ENCODE measurements at regions of chr12 and their contacts with region 1.

Region 1: DNA sequence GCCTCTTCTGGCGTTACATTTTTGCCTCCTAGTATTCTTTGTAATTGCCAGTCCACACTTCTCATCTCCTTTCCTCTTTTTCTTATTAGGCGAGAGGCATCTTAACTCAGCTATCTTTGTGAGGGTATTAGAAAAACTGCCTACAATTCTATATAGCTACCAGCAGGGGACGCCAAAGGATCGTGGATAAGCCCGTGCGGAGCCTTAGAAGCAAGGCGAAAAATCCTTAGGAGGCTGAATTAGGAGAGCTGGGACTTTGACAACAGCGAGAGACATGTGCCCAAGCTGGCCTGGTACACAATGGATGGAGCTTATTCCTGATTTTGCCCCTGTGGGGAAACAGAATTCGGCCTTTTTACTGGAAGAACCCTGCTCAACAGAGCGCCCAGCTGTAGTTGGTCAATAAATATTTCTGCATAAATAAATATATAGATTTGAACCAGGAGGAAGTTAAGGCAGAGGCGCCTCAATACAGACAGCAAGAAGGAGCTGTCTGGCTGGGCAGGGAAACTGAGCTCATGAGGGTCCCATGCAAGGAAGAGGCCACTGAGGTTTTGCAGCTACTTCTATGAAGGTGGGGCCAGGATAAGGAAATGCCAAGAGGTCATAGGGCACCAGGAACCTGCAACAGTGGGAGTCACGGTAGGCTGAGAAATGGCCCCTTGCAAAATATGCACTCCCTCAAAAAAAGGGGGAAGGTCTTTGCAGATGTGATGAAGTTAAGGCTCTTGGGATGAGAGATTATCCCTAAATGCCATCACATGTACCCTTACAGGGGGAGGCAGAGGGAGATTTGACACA is 14.6 kb upstream of the RBM19 start:
- DNase-seq: peak; percentile 36 to 79
- ATAC-seq: peak; percentile 71 to 89
- H3K4me3 ChIP-seq: no peak overlapping the region
- H3K27ac ChIP-seq: no peak overlapping the region
- H3K4me1 ChIP-seq: no peaks in the 10 kb centered on the region
- CTCF ChIP-seq: peak; percentile 96
- EP300 ChIP-seq: no peak
- POLR2A ChIP-seq: no peak
- RAD21 ChIP-seq: peak; percentile 94 to 100

Region 2: GRCh38 chr12:113965951-113966797 is 14.6 kb before region 1 on chr12 and contains the start of gene RBM19:
- CTCF ChIA-PET with region 1: interaction called, 36 read pairs
- POLR2A ChIA-PET with region 1: interaction called, 3 read pairs
- DNase-seq: peak; percentile 97 to 98
- ATAC-seq: peak; percentile 89 to 98
- H3K4me3 ChIP-seq: peak within 1 kb of the TSS; percentile 62
- H3K27ac ChIP-seq: peak within 1 kb of the TSS; percentile 64 to 87
- H3K4me1 ChIP-seq: peaks cover 11% of the 10 kb centered on the region; the same call in 2 of the 3 replicates
- CTCF ChIP-seq: peak; percentile 89
- EP300 ChIP-seq: no peak
- POLR2A ChIP-seq: peak; percentile 77
- RAD21 ChIP-seq: peak; percentile 52 to 61
- polyA plus RNA-seq, gene RBM19: 14.9 and 16.0 TPM in 2 replicates

Region 3: GRCh38 chr12:113996026-113996425 is 15.3 kb after region 1 on chr12:
- CTCF ChIA-PET with region 1: interaction called, 38 read pairs
- POLR2A ChIA-PET with region 1: no interaction called
- DNase-seq: no peak
- ATAC-seq: peak; percentile 61 to 78; a peak in 4 of 6 replicates
- H3K4me3 ChIP-seq: no peak overlapping the region
- H3K27ac ChIP-seq: no peak overlapping the region
- H3K4me1 ChIP-seq: no peaks in the 10 kb centered on the region
- CTCF ChIP-seq: no peak
- EP300 ChIP-seq: no peak
- POLR2A ChIP-seq: no peak
- RAD21 ChIP-seq: no peak

Region 4: GRCh38 chr12:114263056-114263805 is 282.5 kb after region 1 on chr12:
- CTCF ChIA-PET with region 1: no interaction called
- POLR2A ChIA-PET with region 1: no interaction called
- DNase-seq: no peak
- ATAC-seq: no peak
- H3K4me3 ChIP-seq: no peak overlapping the region
- H3K27ac ChIP-seq: no peak overlapping the region
- H3K4me1 ChIP-seq: no peaks in the 10 kb centered on the region
- CTCF ChIP-seq: no peak
- EP300 ChIP-seq: no peak
- POLR2A ChIP-seq: no peak
- RAD21 ChIP-seq: no peak

Region 5: GRCh38 chr12:114476159-114476558 is 495.4 kb after region 1 on chr12:
- CTCF ChIA-PET with region 1: interaction called, 40 read pairs
- POLR2A ChIA-PET with region 1: no interaction called
- DNase-seq: peak in 1 of 2 experiments; percentile 49
- ATAC-seq: peak; percentile 48 to 78; a peak in 4 of 6 replicates
- H3K4me3 ChIP-seq: no peak overlapping the region
- H3K27ac ChIP-seq: no peak overlapping the region
- H3K4me1 ChIP-seq: 0 out of 3 replicates have a peak, but pooled peaks cover 6% of the 10 kb centered on the region
- CTCF ChIP-seq: peak; percentile 56
- EP300 ChIP-seq: no peak
- POLR2A ChIP-seq: no peak
- RAD21 ChIP-seq: peak; percentile 55 to 66

Region 6: DNA sequence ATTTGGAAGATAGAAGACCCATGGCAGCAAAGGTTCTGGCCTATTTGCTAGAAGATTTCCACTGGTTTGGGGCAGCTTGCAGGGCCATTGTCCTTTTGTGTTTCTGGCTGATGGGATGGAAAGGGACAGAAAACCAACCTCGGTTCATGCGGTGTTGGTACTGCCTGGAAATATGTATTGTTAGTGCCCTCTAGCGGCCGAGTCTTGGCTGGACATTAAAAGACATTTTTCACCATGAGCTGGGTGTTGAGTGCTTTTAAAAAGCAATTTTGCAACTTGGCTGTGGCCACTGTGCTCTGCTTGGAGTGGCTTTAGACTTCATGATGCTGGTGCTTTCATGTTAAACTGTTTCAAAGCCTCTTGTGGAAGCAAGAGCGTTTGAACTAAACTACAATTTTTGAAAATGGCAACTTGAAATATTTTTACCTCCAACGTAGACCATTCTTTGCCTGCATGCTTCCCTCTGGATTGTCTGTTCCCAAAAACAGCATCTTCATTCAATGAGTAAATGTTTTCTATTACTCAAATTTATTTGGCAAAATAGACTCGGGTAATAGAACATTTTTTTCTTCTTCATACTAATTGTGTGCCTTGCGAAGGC is 527.9 kb after region 1 on chr12:
- CTCF ChIA-PET with region 1: interaction called, 19 read pairs
- POLR2A ChIA-PET with region 1: no interaction called
- DNase-seq: peak; percentile 76 to 80
- ATAC-seq: peak; percentile 73 to 89
- H3K4me3 ChIP-seq: no peak overlapping the region
- H3K27ac ChIP-seq: no peak overlapping the region
- H3K4me1 ChIP-seq: no peaks in the 10 kb centered on the region
- CTCF ChIP-seq: peak; percentile 71
- EP300 ChIP-seq: no peak
- POLR2A ChIP-seq: no peak
- RAD21 ChIP-seq: peak; percentile 72 to 84

Region 7: DNA sequence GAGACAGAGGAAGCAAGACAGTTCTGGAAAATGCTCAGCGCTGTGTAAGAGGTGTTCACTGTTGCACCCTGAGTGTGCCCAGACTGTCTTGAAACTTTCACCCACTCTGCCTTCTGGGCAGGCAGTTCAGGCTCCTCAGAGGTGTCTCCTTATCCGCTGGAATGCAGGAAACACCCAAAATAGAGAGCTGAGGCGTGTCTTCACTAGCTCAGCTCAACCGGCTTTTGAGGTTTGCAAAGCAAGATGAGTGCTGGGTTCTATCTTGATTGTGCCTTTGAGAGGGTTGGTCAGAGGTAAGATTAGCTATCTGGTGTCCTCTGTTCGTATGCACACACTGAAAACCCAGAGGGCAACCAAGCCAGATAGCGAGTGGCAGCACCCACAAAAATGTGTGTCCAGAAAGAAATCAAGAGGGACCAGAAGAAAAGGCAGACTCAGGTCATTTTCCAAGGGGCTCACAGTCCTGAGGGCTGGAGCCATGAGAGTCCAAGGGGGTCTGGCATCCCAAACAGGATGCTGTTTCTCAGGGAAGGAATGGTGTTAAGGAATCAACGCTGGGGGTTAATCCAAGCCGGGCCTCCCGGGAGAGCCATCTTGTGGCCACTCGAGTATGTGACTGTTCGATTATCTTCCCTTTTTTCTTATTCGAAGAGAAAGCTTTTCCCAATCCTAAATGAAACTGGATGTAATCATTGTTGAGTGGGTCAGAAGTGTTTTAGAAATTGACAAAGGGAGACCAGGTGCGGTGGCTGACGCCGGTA is 656.2 kb after region 1 on chr12:
- CTCF ChIA-PET with region 1: interaction called, 22 read pairs
- POLR2A ChIA-PET with region 1: no interaction called
- DNase-seq: peak; percentile 48 to 58
- ATAC-seq: peak; percentile 81 to 83
- H3K4me3 ChIP-seq: no peak overlapping the region
- H3K27ac ChIP-seq: peak overlapping the region; percentile 43 to 76
- H3K4me1 ChIP-seq: peaks cover 11% of the 10 kb centered on the region; the same call in 1 of the 3 replicates
- CTCF ChIP-seq: peak; percentile 51
- EP300 ChIP-seq: no peak
- POLR2A ChIP-seq: no peak
- RAD21 ChIP-seq: peak; percentile 29 to 44; a peak in 3 of 5 replicates

Region 8: GRCh38 chr12:115946867-115947696 is 1966.3 kb after region 1 on chr12:
- CTCF ChIA-PET with region 1: interaction called, 10 read pairs
- POLR2A ChIA-PET with region 1: no interaction called
- DNase-seq: no peak
- ATAC-seq: no peak
- H3K4me3 ChIP-seq: no peak overlapping the region
- H3K27ac ChIP-seq: no peak overlapping the region
- H3K4me1 ChIP-seq: no peaks in the 10 kb centered on the region
- CTCF ChIP-seq: peak; percentile 79
- EP300 ChIP-seq: no peak
- POLR2A ChIP-seq: no peak
- RAD21 ChIP-seq: peak; percentile 70 to 77

Measured in A549 (cell line).